Activated naive CD4-positive, alpha-beta T cell treated with anti-CD3 and anti-CD28 coated beads for 36 hours (primary cell): ENCODE measurements at regions of chr21 and their contacts with region 1.

Region 1: DNA sequence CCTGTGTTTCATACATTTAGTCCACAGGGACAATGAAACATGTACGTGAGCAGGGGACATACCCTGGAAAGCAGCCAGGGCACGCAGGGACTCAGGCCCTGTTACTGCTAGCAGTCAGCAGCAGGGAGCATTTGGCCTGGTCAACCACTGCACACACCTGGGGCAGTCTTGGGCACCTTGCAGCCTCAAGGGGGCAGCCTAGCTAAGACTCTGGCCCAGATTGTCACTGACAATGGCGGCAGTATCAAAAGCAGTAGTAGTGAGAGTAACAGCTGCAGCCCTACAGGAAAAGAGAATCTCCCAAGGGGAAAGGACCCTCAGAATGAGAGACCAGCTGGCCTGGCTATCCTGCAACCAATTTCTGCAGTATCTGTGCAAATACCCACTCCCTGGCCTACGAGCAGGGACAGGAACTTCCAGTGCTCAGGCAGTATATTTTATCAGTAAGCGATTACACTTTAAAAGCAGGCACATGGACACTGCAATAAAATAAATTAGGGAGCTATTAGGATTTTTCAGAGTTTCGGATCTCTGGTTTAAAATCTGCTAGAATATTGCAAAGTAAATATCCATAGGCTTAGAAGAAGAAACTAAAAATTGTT is 475.6 kb downstream of the LTN1 start:
- DNase-seq: peak; percentile 79
- H3K4me3 Mint-ChIP-seq: no peak overlapping the region
- H3K27ac Mint-ChIP-seq: no peak overlapping the region
- H3K4me1 Mint-ChIP-seq: no peaks in the 10 kb centered on the region
- H3K27me3 Mint-ChIP-seq: no peaks in the 10 kb centered on the region

Region 2: DNA sequence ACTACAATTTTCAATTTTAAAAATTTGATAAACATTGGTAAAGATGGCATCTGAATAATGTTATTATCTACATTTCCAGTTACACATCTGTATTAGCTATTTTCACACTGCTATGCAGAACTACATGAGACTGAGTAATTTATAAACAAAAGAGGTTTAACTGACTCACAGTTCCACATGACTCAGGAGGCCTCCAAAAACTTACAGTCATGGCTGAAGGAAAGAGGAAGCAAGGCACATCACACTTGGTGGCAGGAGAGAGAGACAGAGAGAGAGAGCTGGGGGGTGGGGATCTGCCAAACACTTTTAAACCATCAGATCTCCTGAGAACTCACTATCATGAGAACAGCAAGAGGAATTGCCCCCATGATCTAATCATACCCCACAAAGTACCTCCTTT is 374.4 kb before region 1 on chr21:
- CTCF ChIA-PET with region 1: no interaction called
- intact Hi-C with region 1: no loop called
- DNase-seq: no peak
- H3K4me3 Mint-ChIP-seq: no peak overlapping the region
- H3K27ac Mint-ChIP-seq: no peak overlapping the region
- H3K4me1 Mint-ChIP-seq: no peaks in the 10 kb centered on the region
- H3K27me3 Mint-ChIP-seq: no peaks in the 10 kb centered on the region

Region 3: DNA sequence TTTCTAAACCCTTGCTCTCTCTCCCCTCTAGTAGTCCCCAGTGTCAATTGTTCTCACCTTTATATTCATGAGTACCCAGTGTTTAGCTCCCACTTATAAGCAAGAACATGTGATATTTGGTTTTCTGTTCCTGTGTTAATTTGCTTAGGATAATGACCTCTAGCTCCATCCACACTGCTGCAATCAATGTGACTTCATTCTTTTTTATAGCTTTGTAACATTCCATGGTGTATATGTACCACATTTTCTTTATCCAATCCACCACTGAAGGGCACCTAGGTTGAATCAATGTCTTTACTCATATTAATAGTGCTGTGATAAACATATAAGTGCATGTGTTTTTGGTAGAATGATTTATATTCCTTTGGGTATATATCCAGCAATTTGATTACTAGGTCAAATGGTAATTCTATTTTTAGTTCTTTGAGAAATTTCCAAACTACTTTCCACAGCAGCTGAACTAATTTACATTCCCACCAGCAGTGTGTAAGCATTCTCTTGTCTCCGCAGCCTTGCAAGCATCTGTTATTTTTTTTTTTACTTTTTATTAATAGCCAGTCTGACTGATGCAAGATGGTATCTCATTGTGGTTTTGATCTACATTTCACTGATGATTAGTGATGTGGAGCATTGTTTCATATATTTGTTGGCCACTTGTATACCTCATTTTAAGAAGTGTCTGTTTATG is 197.8 kb after region 1 on chr21:
- CTCF ChIA-PET with region 1: interaction called, 3 read pairs
- intact Hi-C with region 1: loop called (anchors 1 kb)
- DNase-seq: no peak
- H3K4me3 Mint-ChIP-seq: no peak overlapping the region
- H3K27ac Mint-ChIP-seq: no peak overlapping the region
- H3K4me1 Mint-ChIP-seq: no peaks in the 10 kb centered on the region
- H3K27me3 Mint-ChIP-seq: no peaks in the 10 kb centered on the region

Region 4: GRCh38 chr21:28943631-28944030 is 426.5 kb after region 1 on chr21:
- CTCF ChIA-PET with region 1: interaction called, 4 read pairs
- intact Hi-C with region 1: loop called (anchors 1 kb)
- DNase-seq: no peak
- H3K4me3 Mint-ChIP-seq: no peak overlapping the region
- H3K27ac Mint-ChIP-seq: no peak overlapping the region
- H3K4me1 Mint-ChIP-seq: no peaks in the 10 kb centered on the region
- H3K27me3 Mint-ChIP-seq: no peaks in the 10 kb centered on the region